Body of pancreas (tissue), 4 donors: ENCODE measurements at regions of chr15 and their contacts with region 1.

Region 1: GRCh38 chr15:74620636-74621545 is 5.3 kb downstream of the CLK3 start:
- DNase-seq: peak; percentile 71 to 82 (median 78)
- ATAC-seq: peak; percentile 60
- H3K4me3 ChIP-seq: no peak overlapping the region
- H3K27ac ChIP-seq: no peak overlapping the region
- H3K4me1 ChIP-seq: peaks cover 42% of the 10 kb centered on the region
- H3K27me3 ChIP-seq: no peaks in the 10 kb centered on the region
- CTCF ChIP-seq: peak; percentile 46 to 82 (median 64)
- POLR2A ChIP-seq: no peak

Region 2: GRCh38 chr15:74196179-74196590 is 424.7 kb before region 1 on chr15:
- intact Hi-C with region 1: no loop called
- DNase-seq: peak in 3 of 4 donors; percentile 44 to 56 (median 52)
- ATAC-seq: peak; percentile 18
- H3K4me3 ChIP-seq: no peak overlapping the region
- H3K27ac ChIP-seq: no peak overlapping the region
- H3K4me1 ChIP-seq: peaks cover 10% of the 10 kb centered on the region
- H3K27me3 ChIP-seq: no peaks in the 10 kb centered on the region
- CTCF ChIP-seq: no peak
- POLR2A ChIP-seq: no peak

Region 3: DNA sequence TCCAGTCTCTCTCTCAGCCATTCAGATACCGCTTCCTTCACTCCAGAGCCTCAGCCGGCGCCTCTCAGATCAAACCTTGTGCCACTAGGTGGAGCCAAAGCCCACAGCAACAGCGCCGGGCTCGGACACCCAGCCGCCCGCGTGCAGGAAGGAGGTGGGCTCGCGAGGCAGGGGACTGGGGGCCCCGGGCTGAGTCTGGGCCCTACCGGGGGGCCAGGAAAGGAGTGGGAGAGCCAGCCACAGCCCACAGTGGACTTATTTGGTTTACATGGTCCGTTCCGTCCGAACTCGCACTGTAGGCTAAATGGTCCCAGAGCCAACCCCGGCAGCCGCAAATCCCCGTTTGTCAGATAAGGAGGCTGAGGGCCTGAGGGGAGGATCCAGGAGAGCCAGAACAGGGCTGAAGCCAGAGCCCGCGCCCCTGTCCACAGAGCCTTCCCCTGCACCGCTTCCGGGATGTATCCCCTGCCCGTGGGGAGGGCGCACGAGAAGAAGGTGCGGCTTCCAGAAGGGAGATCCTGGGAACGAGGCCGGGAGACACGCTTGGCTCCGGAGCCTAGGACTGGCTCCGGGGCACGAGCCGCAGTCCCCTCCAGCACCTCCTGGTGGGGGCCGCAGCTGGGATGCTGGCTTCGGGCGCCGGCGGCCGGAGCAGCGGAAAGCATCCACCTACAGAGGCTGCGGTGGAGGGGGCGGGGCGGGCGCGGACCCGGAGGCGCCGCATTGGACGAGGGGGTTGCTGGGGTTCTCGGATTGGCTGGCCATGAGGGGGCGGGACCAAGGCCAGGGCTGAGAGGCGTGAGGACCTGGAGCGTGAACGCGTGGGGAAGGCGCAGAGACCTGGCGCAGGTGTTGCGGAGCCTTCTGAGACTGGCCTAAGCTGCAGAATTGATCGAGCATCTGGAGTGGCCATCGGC is 246.9 kb before region 1 on chr15:
- intact Hi-C with region 1: loop called (anchors 10 kb)
- DNase-seq: peak; percentile 94 to 96 (median 94)
- ATAC-seq: peak; percentile 98
- H3K4me3 ChIP-seq: peak overlapping the region; percentile 13 to 54
- H3K27ac ChIP-seq: peak overlapping the region in 2 of 4 donors; percentile 29 to 34
- H3K4me1 ChIP-seq: peaks cover 20% of the 10 kb centered on the region
- H3K27me3 ChIP-seq: no peaks in the 10 kb centered on the region
- CTCF ChIP-seq: peak; percentile 83 to 91 (median 87)
- POLR2A ChIP-seq: peak in 1 of 3 donors; percentile 17

Region 4: DNA sequence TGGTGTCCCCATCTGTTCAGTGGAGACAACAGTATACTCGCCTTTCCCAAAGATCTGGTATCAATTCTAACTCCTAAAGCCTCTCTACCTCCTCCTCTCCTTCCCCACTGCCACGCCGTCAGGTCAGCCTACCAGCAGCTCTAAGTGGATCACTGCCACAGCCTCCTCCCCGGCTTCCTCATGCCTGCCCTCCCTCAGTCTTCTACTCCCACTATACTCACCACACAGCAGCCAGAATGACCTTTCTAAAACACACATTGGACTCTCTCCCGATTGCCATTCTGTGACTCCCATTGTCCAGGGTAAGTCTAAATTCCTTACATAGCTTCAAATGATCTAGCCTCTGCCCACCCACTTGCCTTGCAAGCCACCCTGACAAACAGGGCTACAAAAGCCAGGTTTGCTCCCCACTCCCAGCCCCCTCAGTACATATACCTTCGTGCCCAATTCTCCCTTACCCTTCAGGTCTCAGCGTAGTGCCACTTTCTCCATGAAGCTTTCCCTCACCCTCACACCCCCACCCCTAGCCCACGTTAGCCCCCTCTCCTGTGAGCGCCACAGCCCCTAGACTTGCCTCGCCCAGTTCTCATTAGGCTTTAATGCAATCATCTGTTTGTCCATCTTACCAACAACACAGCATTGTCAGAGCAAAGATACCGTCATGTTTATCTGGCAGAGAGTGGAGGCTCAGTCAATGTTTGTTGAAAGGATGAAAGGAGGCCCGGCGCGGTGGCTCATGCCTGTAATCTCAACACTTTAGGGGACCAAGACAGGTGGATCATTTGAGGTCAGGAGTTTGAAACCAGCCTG is 177.6 kb before region 1 on chr15:
- intact Hi-C with region 1: loop called (anchors 10 kb)
- DNase-seq: no peak
- ATAC-seq: no peak
- H3K4me3 ChIP-seq: no peak overlapping the region
- H3K27ac ChIP-seq: no peak overlapping the region
- H3K4me1 ChIP-seq: peaks cover 6% of the 10 kb centered on the region
- H3K27me3 ChIP-seq: no peaks in the 10 kb centered on the region
- CTCF ChIP-seq: no peak
- POLR2A ChIP-seq: no peak

Region 5: GRCh38 chr15:74950078-74951000 is 329.4 kb after region 1 on chr15:
- intact Hi-C with region 1: loop called (anchors 10 kb)
- DNase-seq: peak; percentile 78 to 89 (median 84)
- ATAC-seq: peak; percentile 92
- H3K4me3 ChIP-seq: no peak overlapping the region
- H3K27ac ChIP-seq: no peak overlapping the region
- H3K4me1 ChIP-seq: peaks cover 15% of the 10 kb centered on the region
- H3K27me3 ChIP-seq: no peaks in the 10 kb centered on the region
- CTCF ChIP-seq: peak; percentile 92 to 99 (median 98)
- POLR2A ChIP-seq: no peak

Region 6: DNA sequence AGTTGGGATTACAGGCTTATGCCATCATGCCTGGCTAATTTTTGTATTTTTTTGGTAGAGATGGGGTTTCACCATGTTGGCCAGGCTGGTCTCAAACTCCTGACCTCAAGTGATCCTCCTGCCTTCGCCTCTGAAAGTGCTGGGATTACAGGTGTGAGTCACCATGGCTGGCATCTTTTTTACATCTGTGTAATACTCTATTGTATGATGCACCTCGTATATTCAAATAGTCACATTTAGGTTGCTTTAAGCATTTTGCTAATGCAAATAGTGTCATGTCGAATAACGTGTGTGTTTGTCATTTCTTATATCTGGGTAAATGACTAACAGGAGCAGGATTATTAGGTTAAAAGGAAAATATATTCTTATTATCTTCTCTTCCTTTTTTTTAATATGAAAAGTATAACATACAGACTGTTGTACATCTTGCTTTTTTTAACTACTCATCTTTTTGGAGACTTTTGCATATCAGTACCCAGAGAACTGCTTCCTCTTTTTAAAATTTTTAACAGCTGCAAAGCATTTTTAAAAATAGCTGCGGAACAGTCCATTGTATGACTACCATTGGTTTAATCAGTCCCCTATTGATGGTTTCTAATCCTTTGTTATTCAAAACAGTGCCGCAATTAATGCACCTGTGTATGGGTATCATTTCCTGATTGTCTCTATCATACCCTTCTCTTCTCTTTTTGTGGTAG is 387.9 kb after region 1 on chr15:
- intact Hi-C with region 1: no loop called
- DNase-seq: no peak
- ATAC-seq: no peak
- H3K4me3 ChIP-seq: no peak overlapping the region
- H3K27ac ChIP-seq: no peak overlapping the region
- H3K4me1 ChIP-seq: peaks cover 9% of the 10 kb centered on the region
- H3K27me3 ChIP-seq: no peaks in the 10 kb centered on the region
- CTCF ChIP-seq: no peak
- POLR2A ChIP-seq: no peak